Right cardiac atrium (tissue), 5 donors: ENCODE measurements at regions of chr9 and their contacts with region 1.

Region 1: GRCh38 chr9:81445331-81445921 is 243.9 kb downstream of the TLE1 start:
- DNase-seq: no peak
- ATAC-seq: no peak
- H3K4me3 ChIP-seq: no peak overlapping the region
- H3K27ac ChIP-seq: no peak overlapping the region
- H3K4me1 ChIP-seq: no peaks in the 10 kb centered on the region
- H3K27me3 ChIP-seq: no peaks in the 10 kb centered on the region

Region 2: GRCh38 chr9:81045658-81046057 is 399.8 kb before region 1 on chr9:
- intact Hi-C with region 1: no loop called
- DNase-seq: no peak
- ATAC-seq: no peak
- H3K4me3 ChIP-seq: no peak overlapping the region
- H3K27ac ChIP-seq: no peak overlapping the region
- H3K4me1 ChIP-seq: no peaks in the 10 kb centered on the region
- H3K27me3 ChIP-seq: no peaks in the 10 kb centered on the region

Region 3: GRCh38 chr9:81492710-81493447 is 47.5 kb after region 1 on chr9:
- intact Hi-C with region 1: no loop called
- DNase-seq: no peak
- ATAC-seq: no peak
- H3K4me3 ChIP-seq: no peak overlapping the region
- H3K27ac ChIP-seq: no peak overlapping the region
- H3K4me1 ChIP-seq: no peaks in the 10 kb centered on the region
- H3K27me3 ChIP-seq: no peaks in the 10 kb centered on the region

Region 4: DNA sequence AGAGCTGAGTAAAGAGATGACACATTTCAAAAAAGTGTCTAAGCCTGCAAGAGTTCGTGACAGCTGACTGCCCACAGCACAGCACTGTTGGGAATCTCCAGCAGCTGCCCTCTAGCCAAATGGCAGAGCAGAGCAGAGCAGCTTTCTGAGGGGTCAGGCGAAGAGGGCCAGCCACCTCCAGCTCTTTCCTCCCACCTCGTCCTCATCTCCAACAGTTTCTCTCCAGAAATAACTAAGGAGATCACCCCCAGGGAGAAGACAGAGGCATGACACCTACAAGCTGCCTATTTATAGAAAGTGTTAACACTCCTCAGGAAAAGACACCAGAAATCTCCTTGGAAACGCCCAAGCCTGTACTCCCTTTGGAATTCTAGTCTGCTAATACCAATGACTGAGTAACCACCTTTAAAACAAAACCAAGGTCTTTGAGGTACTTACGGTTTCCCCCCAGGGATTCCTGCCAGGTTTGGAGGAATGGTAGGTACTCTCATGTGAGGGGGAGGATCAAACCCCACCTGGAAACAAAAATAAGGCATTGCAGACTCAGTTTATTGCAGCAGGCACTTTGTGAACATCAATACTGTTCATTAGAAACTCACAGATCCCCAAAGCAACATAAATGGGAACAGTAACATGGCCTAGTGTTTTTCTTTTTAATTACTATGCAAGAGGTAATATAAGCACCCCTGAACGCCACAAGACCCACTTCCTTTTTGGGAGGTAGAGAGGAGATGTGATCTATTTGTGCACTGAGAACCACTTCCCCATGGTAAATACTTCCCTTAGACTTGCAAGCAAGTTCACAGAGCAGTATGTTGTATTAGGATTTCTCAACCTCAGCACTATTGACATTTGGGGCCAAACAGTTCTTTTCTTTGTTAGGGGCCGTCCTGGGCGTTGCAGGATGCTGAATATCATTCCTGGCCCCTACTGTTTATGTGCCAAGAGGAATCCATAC is 164.6 kb after region 1 on chr9:
- intact Hi-C with region 1: no loop called
- DNase-seq: no peak
- ATAC-seq: no peak
- H3K4me3 ChIP-seq: no peak overlapping the region
- H3K27ac ChIP-seq: no peak overlapping the region
- H3K4me1 ChIP-seq: peaks cover 4% of the 10 kb centered on the region
- H3K27me3 ChIP-seq: no peaks in the 10 kb centered on the region

Region 5: DNA sequence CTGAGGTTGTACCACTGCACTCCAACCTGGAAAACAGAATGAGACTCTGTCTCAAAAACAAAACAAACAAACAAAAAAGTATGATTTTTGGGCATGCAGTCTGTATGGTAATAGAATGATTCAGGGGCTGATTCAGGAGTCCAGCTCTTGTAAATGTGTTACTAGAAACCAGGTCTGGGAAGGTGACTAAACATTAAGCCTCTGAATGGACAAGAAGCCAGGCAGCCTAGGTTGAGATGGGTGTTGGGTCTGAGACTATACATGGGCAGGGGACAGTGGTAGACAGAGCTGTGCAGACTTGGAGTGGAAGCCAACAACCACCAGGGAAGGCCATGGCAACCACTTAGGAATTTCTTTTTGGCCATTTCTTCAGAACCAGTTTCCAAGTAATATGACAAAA is 308.8 kb after region 1 on chr9:
- intact Hi-C with region 1: loop called in 1 of 4 experiments (anchors 5 kb)
- DNase-seq: no peak
- ATAC-seq: no peak
- H3K4me3 ChIP-seq: no peak overlapping the region
- H3K27ac ChIP-seq: no peak overlapping the region
- H3K4me1 ChIP-seq: no peaks in the 10 kb centered on the region
- H3K27me3 ChIP-seq: no peaks in the 10 kb centered on the region